ENCODE measurements at regions of chr6 and their contacts with region 1.

Region 1: GRCh38 chr6:26196846-26197648 is 109.8 kb downstream of the HFE start:
- DNase-seq: peak; percentile 87
- CTCF ChIP-seq: peak; percentile 11

Region 2: GRCh38 chr6:26045065-26045927 is 151.8 kb before region 1 on chr6:
- CTCF ChIA-PET with region 1: no interaction called
- POLR2A ChIA-PET with region 1: interaction called, 28 read pairs
- DNase-seq: peak; percentile 88
- CTCF ChIP-seq: peak; percentile 12

Region 3: GRCh38 chr6:26175428-26176181 is 21.4 kb before region 1 on chr6:
- CTCF ChIA-PET with region 1: interaction called, 11 read pairs
- POLR2A ChIA-PET with region 1: interaction called, 10 read pairs
- DNase-seq: peak; percentile 59
- CTCF ChIP-seq: peak; percentile 59

Region 4: GRCh38 chr6:26234421-26235296 is 37.6 kb after region 1 on chr6:
- CTCF ChIA-PET with region 1: interaction called, 12 read pairs
- POLR2A ChIA-PET with region 1: interaction called, 33 read pairs
- DNase-seq: peak; percentile 73
- CTCF ChIP-seq: no peak

Region 5: GRCh38 chr6:26285143-26286134 is 88.4 kb after region 1 on chr6:
- CTCF ChIA-PET with region 1: no interaction called
- POLR2A ChIA-PET with region 1: interaction called, 12 read pairs
- DNase-seq: peak; percentile 79
- CTCF ChIP-seq: no peak